Gastrocnemius medialis (tissue), 4 donors: ENCODE measurements at regions of chr1 and their contacts with region 1.

Region 1: DNA sequence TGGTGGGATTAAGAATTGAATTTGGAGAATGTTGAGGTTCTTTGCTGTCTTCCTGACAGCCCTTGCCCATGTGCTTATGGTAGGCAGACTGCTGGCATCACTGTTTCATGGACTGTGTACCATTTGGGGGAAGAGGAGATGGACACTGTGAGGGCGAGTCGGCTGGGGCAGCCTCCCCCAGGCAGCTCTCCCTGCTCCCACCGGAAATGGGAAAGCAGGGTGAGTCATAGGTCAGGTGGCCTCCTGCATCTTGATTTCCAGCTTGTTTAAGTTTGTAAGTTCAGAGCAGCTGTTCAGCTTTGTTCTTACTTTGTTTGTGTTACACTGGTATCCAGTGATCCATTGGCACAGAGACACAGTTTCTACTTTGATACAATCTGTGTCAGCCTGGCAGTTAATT is 87.2 kb upstream of the CNIH3 start:
- DNase-seq: no peak
- ATAC-seq: no peak
- H3K4me3 ChIP-seq: no peak overlapping the region
- H3K27ac ChIP-seq: no peak overlapping the region
- H3K4me1 ChIP-seq: peaks cover 3 to 11% of the 10 kb centered on the region in 2 donors
- H3K27me3 ChIP-seq: no peaks in the 10 kb centered on the region
- CTCF ChIP-seq: no peak
- POLR2A ChIP-seq: no peak

Region 2: GRCh38 chr1:224615861-224616755 is 87.2 kb after region 1 on chr1 and contains the start of gene CNIH3:
- in situ Hi-C with region 1: no loop called
- intact Hi-C with region 1: no loop called
- DNase-seq: peak; percentile 34 to 55
- ATAC-seq: peak; percentile 68 to 88
- H3K4me3 ChIP-seq: peak within 1 kb of the TSS; percentile 58 to 65 (median 64)
- H3K27ac ChIP-seq: peak within 1 kb of the TSS in 2 of 4 donors; percentile 11 to 31
- H3K4me1 ChIP-seq: peaks cover 12 to 18% of the 10 kb centered on the region in 2 donors
- H3K27me3 ChIP-seq: peaks cover 34 to 44% (median 34%) of the 10 kb centered on the region in 3 donors
- CTCF ChIP-seq: peak in 1 of 5 experiments; percentile 16
- POLR2A ChIP-seq: peak in 1 of 2 donors; percentile 33
- total RNA-seq, gene CNIH3: 0.95 to 1.6 (median 1.5) TPM in 3 of 4 donors, not detected in the other

Region 3: DNA sequence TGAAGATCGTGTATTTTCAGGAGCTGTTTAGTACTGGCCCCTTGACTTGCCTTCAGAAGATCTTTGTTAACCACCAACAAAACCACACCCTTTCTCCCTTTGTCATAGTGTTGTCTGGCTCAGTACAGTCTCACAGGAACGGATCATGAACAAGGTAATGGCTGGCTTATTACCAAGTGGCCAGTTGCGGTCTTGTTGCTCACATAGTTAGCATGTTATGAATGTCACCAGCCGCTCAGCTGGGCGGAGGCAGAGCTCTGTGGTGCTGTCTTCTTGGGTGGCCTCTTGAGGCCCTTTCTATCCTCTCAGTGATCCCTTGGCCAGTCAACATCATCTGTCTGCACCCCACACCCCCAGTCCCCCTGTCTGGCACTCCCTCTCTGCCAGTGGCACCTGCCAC is 108.6 kb after region 1 on chr1:
- in situ Hi-C with region 1: loop called in 1 of 4 experiments (anchors 10 kb)
- intact Hi-C with region 1: no loop called
- DNase-seq: peak; percentile 17 to 42
- ATAC-seq: peak; percentile 76
- H3K4me3 ChIP-seq: no peak overlapping the region
- H3K27ac ChIP-seq: no peak overlapping the region
- H3K4me1 ChIP-seq: peaks cover 0 to 3% of the 10 kb centered on the region in 2 donors
- H3K27me3 ChIP-seq: no peaks in the 10 kb centered on the region
- CTCF ChIP-seq: no peak
- POLR2A ChIP-seq: no peak